OCI-LY7 (cell line): ENCODE measurements at regions of chr6 and their contacts with region 1.

Region 1: DNA sequence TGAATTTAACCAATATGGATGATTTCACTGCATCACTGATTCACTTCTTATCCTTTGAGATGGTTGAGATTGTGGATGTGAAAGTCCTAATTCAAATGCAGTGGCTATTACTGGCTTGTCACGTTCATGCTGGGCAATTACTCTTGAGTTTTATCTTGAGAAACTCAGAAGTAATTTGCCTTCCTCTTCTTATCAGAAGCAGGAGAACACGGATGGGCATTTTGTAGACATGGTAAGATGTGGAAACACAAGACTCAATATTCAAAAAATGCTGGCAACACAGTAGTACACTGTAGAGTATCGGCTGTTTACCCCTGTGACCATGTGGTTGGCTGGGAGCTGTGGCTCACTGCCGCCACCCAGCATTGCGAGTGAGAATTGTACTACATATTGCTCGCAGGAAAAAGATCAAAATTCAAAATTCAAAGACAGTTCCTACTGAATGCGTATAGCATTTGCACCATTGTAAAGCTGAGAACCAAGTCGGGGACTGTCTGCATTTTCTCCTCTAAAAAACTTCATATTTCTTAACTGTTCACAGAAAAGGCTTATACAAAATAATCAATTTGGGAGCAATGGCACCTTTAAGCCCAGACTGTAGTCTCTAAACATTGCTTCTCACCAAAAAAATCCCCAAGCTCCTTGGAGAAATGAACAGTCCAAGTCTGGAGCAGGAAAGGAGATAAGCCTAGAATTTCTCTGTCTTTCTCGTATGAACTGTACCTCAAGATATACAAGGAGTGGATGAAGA is 61.9 kb upstream of the ELOVL5 start:
- DNase-seq: peak; percentile 80
- H3K4me3 ChIP-seq: peak overlapping the region; percentile 19
- H3K27ac ChIP-seq: peak overlapping the region; percentile 39
- H3K4me1 ChIP-seq: peaks cover 17% of the 10 kb centered on the region
- CTCF ChIP-seq: peak; percentile 99

Region 2: DNA sequence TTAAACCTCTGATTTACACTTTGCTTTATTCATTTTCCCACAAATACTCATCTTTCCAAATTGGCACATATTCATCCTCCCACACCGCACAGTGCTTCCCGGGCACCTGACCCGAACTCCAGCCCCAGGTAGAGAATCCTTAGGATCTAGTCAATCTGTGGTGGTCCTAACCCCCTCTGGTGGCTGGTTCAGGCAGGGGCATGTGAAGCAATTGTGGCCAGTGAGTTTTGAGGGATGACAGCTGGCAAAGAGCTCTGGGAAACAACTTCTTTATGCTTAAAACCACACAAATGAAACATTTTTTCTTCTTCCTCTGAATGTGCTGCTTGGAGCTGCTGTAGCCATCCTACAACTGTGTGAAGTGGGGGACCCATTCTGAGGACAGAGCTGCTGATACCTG is 116.6 kb before region 1 on chr6:
- CTCF ChIA-PET with region 1: no interaction called
- POLR2A ChIA-PET with region 1: no interaction called
- intact Hi-C with region 1: loop called (anchors 2 kb)
- DNase-seq: peak; percentile 54
- H3K4me3 ChIP-seq: no peak overlapping the region
- H3K27ac ChIP-seq: no peak overlapping the region
- H3K4me1 ChIP-seq: peaks cover 16% of the 10 kb centered on the region
- CTCF ChIP-seq: peak; percentile 95

Region 3: GRCh38 chr6:53375847-53376246 is 34.8 kb before region 1 on chr6:
- CTCF ChIA-PET with region 1: no interaction called
- POLR2A ChIA-PET with region 1: no interaction called
- intact Hi-C with region 1: no loop called
- DNase-seq: no peak
- H3K4me3 ChIP-seq: no peak overlapping the region
- H3K27ac ChIP-seq: no peak overlapping the region
- H3K4me1 ChIP-seq: no peaks in the 10 kb centered on the region
- CTCF ChIP-seq: no peak